PC-9 (cell line): ENCODE measurements at regions of chr13 and their contacts with region 1.

Region 1: GRCh38 chr13:19863323-19864023 is at the start of gene ZMYM5:
- DNase-seq: peak; percentile 94 to 96
- H3K4me3 ChIP-seq: peak within 1 kb of the TSS; percentile 68
- H3K27ac ChIP-seq: peak within 1 kb of the TSS; percentile 81
- H3K4me1 ChIP-seq: peaks cover 29% of the 10 kb centered on the region
- H3K27me3 ChIP-seq: no peaks in the 10 kb centered on the region
- CTCF ChIP-seq: no peak
- total RNA-seq, gene ZMYM5: 10.0 and 10.3 TPM in 2 replicates

Region 2: GRCh38 chr13:19362946-19363510 is 500.4 kb before region 1 on chr13:
- CTCF ChIA-PET with region 1: no interaction called
- POLR2A ChIA-PET with region 1: no interaction called
- intact Hi-C with region 1: no loop called
- DNase-seq: no peak
- H3K4me3 ChIP-seq: no peak overlapping the region
- H3K27ac ChIP-seq: no peak overlapping the region
- H3K4me1 ChIP-seq: no peaks in the 10 kb centered on the region
- H3K27me3 ChIP-seq: peaks cover 26% of the 10 kb centered on the region
- CTCF ChIP-seq: no peak

Region 3: DNA sequence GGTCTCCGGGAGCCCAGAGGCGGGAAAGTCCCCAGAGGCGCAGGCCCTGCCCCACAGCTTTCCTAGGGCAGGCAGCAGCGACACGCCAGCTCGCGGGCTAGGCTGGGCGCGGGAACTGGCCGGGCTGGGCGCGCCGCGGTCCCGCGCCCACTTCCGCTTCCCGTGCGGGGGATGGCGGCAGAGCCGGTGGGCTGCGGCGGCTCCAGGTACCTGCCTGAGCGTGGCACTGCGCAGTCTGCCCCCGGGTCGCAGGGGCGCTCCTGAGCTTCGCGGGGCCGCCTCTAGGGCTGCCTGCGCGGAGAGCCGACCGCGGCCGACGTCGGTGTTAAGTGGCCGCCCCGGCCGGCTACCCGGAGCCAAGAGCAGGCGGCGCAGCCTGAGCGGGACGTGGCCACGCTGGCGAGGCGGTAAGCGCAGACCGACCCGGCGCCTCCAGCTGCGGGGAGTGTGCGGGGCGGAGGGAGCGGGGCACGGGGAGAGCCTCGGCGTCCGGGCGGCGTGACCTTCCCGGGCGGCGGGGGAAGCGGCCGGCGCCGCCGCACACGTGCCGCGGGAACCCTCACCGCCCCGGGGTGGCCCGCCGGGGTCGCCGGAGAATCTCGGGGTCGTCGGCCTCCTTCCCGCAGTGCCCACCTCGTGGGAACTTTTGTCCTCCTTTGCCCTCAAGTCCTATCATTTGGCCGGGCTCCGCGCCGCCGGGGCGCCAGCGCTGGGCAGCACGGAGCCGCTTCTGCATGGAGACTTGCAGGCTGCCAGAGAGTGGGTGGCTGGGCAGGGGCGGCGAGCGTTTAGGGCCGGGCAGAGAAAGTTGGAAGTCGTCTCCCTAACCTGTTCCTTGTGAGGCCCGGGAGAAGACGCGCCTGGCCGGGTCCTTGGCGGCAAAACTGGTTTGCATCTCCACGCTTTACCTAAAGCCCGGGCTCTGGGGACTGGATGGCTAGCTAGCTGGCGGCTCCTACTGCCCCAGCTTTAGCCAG is 261.4 kb before region 1 on chr13:
- CTCF ChIA-PET with region 1: interaction called, 4 read pairs
- POLR2A ChIA-PET with region 1: no interaction called
- intact Hi-C with region 1: loop called (anchors 10 kb)
- DNase-seq: peak in 1 of 2 experiments; percentile 46
- H3K4me3 ChIP-seq: peak overlapping the region; percentile 87
- H3K27ac ChIP-seq: no peak overlapping the region
- H3K4me1 ChIP-seq: peaks cover 26% of the 10 kb centered on the region
- H3K27me3 ChIP-seq: no peaks in the 10 kb centered on the region
- CTCF ChIP-seq: 0 out of 2 replicates have a peak, but pooled peaks have one; percentile 33

Region 4: GRCh38 chr13:19782049-19782726 is 81.3 kb before region 1 on chr13:
- CTCF ChIA-PET with region 1: no interaction called
- POLR2A ChIA-PET with region 1: interaction called, 17 read pairs
- intact Hi-C with region 1: no loop called
- DNase-seq: peak in 1 of 2 experiments; percentile 16
- H3K4me3 ChIP-seq: peak overlapping the region; percentile 100
- H3K27ac ChIP-seq: peak overlapping the region; percentile 74
- H3K4me1 ChIP-seq: 0 out of 2 replicates have a peak, but pooled peaks cover 11% of the 10 kb centered on the region
- H3K27me3 ChIP-seq: no peaks in the 10 kb centered on the region
- CTCF ChIP-seq: no peak

Region 5: DNA sequence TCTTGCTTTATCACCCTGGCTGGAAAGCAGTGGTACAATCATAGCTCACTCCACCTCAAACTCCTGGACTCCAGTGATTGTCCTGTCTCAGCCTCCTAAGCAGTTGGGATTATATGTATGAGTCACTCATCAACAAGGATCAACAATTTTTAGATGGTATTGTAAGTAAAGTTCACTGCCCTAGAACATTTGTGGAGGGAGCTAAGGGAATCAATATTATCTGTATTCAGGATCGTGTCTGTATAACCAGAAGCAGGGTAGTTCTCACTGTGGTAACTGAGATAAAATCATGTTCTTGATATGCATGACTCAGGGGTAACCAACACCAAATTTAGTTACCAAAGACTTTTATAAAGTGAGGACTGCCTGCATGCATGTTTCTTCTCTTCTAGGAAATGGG is 27.0 kb before region 1 on chr13:
- CTCF ChIA-PET with region 1: no interaction called
- POLR2A ChIA-PET with region 1: interaction called, 20 read pairs
- intact Hi-C with region 1: no loop called
- DNase-seq: peak in 1 of 2 experiments; percentile 58
- H3K4me3 ChIP-seq: no peak overlapping the region
- H3K27ac ChIP-seq: peak overlapping the region; percentile 27
- H3K4me1 ChIP-seq: peaks cover 9% of the 10 kb centered on the region; the same call in 1 of the 2 replicates
- H3K27me3 ChIP-seq: no peaks in the 10 kb centered on the region
- CTCF ChIP-seq: no peak

Region 6: GRCh38 chr13:19959831-19960652 is 96.6 kb after region 1 on chr13:
- CTCF ChIA-PET with region 1: no interaction called
- POLR2A ChIA-PET with region 1: no interaction called
- intact Hi-C with region 1: loop called (anchors 5 kb)
- DNase-seq: peak; percentile 72 to 84
- H3K4me3 ChIP-seq: peak overlapping the region; percentile 76
- H3K27ac ChIP-seq: peak overlapping the region; percentile 37
- H3K4me1 ChIP-seq: peaks cover 16% of the 10 kb centered on the region
- H3K27me3 ChIP-seq: no peaks in the 10 kb centered on the region
- CTCF ChIP-seq: peak; percentile 77